Naive thymus-derived CD4-positive, alpha-beta T cell (primary cell): ENCODE measurements at regions of chr5 and their contacts with region 1.

Region 1: DNA sequence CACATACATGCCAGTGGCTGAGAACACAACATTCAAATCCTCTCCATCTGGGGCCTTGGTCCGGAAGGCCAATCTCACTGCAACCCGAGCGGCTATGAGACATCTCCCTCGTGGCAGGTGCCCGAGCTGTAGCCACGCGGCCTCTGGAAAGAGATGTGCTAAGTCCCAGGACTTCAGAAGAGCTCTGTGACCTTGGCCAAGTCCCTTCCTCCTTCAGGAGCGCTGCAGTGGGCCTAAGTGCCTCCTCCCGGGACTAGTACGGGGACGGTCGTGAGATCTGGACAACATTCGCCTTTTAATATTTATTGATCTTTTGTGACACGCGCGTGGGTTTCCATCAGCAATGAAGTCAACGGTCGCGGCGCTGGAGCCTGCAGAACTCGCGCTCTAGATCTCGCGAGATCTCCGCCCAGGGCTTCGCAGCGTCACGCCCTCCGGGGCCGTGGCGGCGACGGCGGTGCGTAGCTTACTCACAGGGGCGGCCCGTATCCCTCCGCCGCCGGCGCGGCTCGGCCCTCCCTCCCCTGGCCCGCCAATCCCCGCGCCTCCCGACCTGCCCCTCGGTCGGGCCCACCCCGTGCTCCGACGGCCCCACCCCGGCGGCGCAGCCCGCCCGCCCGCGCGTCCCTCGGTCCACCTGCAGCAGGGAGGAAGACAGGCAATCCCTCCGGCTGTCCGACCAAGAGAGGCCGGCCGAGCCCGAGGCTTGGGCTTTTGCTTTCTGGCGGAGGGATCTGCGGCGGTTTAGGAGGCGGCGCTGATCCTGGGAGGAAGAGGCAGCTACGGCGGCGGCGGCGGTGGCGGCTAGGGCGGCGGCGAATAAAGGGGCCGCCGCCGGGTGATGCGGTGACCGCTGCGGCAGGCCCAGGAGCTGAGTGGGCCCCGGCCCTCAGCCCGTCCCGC is at the start of gene UBE2D2:
- DNase-seq: peak; percentile 95 to 98 (median 97)
- ATAC-seq: peak; percentile 94
- H3K4me3 ChIP-seq: peak within 1 kb of the TSS; percentile 85
- H3K4me3 Mint-ChIP-seq: peak within 1 kb of the TSS; percentile 90 to 100 (median 98)
- H3K27ac ChIP-seq: peak within 1 kb of the TSS; percentile 92
- H3K27ac Mint-ChIP-seq: peak within 1 kb of the TSS; percentile 88 to 98 (median 95)
- H3K4me1 ChIP-seq: peaks cover 26 to 36% of the 10 kb centered on the region in 2 donors
- H3K4me1 Mint-ChIP-seq: peaks cover 28 to 39% (median 34%) of the 10 kb centered on the region in 7 donors
- H3K27me3 ChIP-seq: no peaks in the 10 kb centered on the region
- H3K27me3 Mint-ChIP-seq: no peaks in the 10 kb centered on the region
- total RNA-seq, gene UBE2D2: 145 to 214 (median 184) TPM

Region 2: GRCh38 chr5:138464008-138464387 is 1097.0 kb before region 1 on chr5:
- CTCF ChIA-PET with region 1: no interaction called
- POLR2A ChIA-PET with region 1: no interaction called
- intact Hi-C with region 1: loop called (anchors 1 to 5 kb)
- DNase-seq: peak; percentile 90 to 97 (median 94)
- ATAC-seq: peak; percentile 71
- H3K4me3 ChIP-seq: peak overlapping the region; percentile 95
- H3K4me3 Mint-ChIP-seq: peak overlapping the region; percentile 78 to 93 (median 89)
- H3K27ac ChIP-seq: peak overlapping the region; percentile 91
- H3K27ac Mint-ChIP-seq: peak overlapping the region; percentile 76 to 97 (median 91)
- H3K4me1 ChIP-seq: peaks cover 31 to 43% of the 10 kb centered on the region in 2 donors
- H3K4me1 Mint-ChIP-seq: peaks cover 36 to 54% (median 50%) of the 10 kb centered on the region in 7 donors
- H3K27me3 ChIP-seq: no peaks in the 10 kb centered on the region
- H3K27me3 Mint-ChIP-seq: peaks cover 0 to 20% (median 0%) of the 10 kb centered on the region in 5 donors

Region 3: DNA sequence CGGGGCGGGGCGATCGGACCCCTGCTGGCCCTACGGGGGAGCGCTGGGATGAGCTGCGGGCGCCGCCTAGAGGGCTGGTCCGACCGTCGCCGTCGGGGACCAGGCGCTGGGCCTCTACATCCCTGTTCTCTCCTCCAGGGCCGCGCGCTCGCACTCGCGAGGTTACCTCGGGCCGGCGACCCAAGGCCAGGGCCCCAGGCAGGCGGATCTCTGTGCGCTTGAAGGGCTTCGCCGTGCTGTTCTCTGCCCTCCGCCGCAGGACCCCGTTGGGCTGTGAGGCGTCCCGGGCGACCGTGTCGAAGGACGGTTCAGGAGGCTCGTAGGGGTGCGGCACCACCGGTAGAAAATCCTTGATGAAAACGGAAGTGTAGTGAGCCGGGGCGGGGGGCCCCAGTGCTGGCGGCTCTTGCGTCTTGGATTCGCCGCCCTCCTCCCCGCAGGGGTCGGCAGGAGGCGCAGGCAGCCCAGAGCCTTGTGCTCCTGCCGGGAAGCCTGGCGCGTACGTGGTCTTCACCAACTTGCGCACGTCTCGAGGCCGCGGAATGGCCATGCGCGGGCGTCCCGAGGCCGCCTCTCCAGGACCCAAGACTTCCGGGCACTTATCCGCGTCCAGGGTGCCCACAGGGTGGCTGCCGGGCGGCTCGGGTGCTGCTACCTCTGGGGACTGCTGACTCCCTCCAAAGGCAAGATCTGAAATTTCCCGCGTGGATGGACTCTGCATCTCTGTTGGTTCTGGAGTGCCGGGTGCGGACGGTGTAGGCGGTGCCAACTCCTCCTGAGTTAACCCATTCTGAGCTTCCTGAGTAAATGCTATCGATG is 168.1 kb before region 1 on chr5:
- CTCF ChIA-PET with region 1: no interaction called
- POLR2A ChIA-PET with region 1: no interaction called
- intact Hi-C with region 1: loop called in 1 of 2 experiments (anchors 1 kb)
- DNase-seq: peak; percentile 39 to 87 (median 60)
- ATAC-seq: peak; percentile 82
- H3K4me3 ChIP-seq: peak overlapping the region; percentile 76
- H3K4me3 Mint-ChIP-seq: peak overlapping the region; percentile 87 to 97 (median 90)
- H3K27ac ChIP-seq: peak overlapping the region; percentile 17
- H3K27ac Mint-ChIP-seq: peak overlapping the region in 6 of 9 donors; percentile 7 to 97 (median 59)
- H3K4me1 ChIP-seq: peaks cover 5 to 34% of the 10 kb centered on the region in 2 donors
- H3K4me1 Mint-ChIP-seq: peaks cover 12 to 61% (median 23%) of the 10 kb centered on the region in 7 donors
- H3K27me3 ChIP-seq: no peaks in the 10 kb centered on the region
- H3K27me3 Mint-ChIP-seq: no peaks in the 10 kb centered on the region

Region 4: GRCh38 chr5:139482050-139482889 is 78.7 kb before region 1 on chr5 and contains the start of gene STING1:
- CTCF ChIA-PET with region 1: no interaction called
- POLR2A ChIA-PET with region 1: interaction called, 10 read pairs
- intact Hi-C with region 1: loop called in 1 of 2 experiments (anchors 2 kb)
- DNase-seq: peak; percentile 29 to 83 (median 71)
- ATAC-seq: peak; percentile 86
- H3K4me3 ChIP-seq: peak within 1 kb of the TSS; percentile 87
- H3K4me3 Mint-ChIP-seq: peak within 1 kb of the TSS; percentile 86 to 99 (median 94)
- H3K27ac ChIP-seq: peak within 1 kb of the TSS; percentile 80
- H3K27ac Mint-ChIP-seq: peak within 1 kb of the TSS; percentile 94 to 99 (median 96)
- H3K4me1 ChIP-seq: peaks cover 21 to 29% of the 10 kb centered on the region in 2 donors
- H3K4me1 Mint-ChIP-seq: peaks cover 26 to 45% (median 39%) of the 10 kb centered on the region in 7 donors
- H3K27me3 ChIP-seq: no peaks in the 10 kb centered on the region
- H3K27me3 Mint-ChIP-seq: no peaks in the 10 kb centered on the region
- total RNA-seq, gene STING1: 124 to 213 (median 130) TPM

Region 5: GRCh38 chr5:139593716-139594319 is 32.8 kb after region 1 on chr5:
- CTCF ChIA-PET with region 1: interaction called, 4 read pairs
- POLR2A ChIA-PET with region 1: interaction called, 10 read pairs
- intact Hi-C with region 1: loop called (anchors 5 kb)
- DNase-seq: no peak
- ATAC-seq: no peak
- H3K4me3 ChIP-seq: no peak overlapping the region
- H3K4me3 Mint-ChIP-seq: no peak overlapping the region
- H3K27ac ChIP-seq: peak overlapping the region; percentile 20
- H3K27ac Mint-ChIP-seq: peak overlapping the region in 1 of 9 donors; percentile 59
- H3K4me1 ChIP-seq: peaks cover 0 to 22% of the 10 kb centered on the region in 2 donors
- H3K4me1 Mint-ChIP-seq: peaks cover 39 to 73% (median 52%) of the 10 kb centered on the region in 7 donors
- H3K27me3 ChIP-seq: no peaks in the 10 kb centered on the region
- H3K27me3 Mint-ChIP-seq: no peaks in the 10 kb centered on the region

Region 6: DNA sequence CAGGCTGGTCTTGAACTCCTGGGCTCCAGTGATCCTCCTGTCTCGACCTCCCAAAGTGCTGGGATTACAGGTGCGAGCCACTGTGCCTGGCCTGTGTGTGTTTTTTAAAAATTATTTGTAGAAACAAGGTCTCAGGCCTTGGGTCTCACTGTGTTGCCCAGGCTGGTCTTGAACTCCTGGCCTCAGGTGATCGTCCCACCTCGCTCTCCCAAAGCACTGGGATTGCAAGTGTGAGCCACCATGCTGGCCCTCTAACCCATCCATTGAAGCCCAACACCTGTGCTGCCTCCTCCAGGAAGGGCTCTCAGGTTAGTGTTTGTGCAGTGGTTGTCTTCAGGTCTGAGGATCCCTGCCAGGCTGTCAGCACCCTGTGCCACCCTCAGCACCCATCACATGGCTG is 143.7 kb after region 1 on chr5:
- CTCF ChIA-PET with region 1: no interaction called
- POLR2A ChIA-PET with region 1: no interaction called
- intact Hi-C with region 1: no loop called
- DNase-seq: no peak
- ATAC-seq: no peak
- H3K4me3 ChIP-seq: no peak overlapping the region
- H3K4me3 Mint-ChIP-seq: no peak overlapping the region
- H3K27ac ChIP-seq: no peak overlapping the region
- H3K27ac Mint-ChIP-seq: no peak overlapping the region
- H3K4me1 ChIP-seq: peaks cover 0 to 4% of the 10 kb centered on the region in 2 donors
- H3K4me1 Mint-ChIP-seq: peaks cover 6 to 44% (median 28%) of the 10 kb centered on the region in 7 donors
- H3K27me3 ChIP-seq: no peaks in the 10 kb centered on the region
- H3K27me3 Mint-ChIP-seq: peaks cover 5 to 44% (median 13%) of the 10 kb centered on the region in 5 donors

Region 7: GRCh38 chr5:140107312-140108083 is 546.5 kb after region 1 on chr5:
- CTCF ChIA-PET with region 1: no interaction called
- POLR2A ChIA-PET with region 1: no interaction called
- intact Hi-C with region 1: loop called (anchors 2 to 5 kb)
- DNase-seq: peak; percentile 87 to 96 (median 94)
- ATAC-seq: peak; percentile 92
- H3K4me3 ChIP-seq: peak overlapping the region; percentile 80
- H3K4me3 Mint-ChIP-seq: peak overlapping the region; percentile 93 to 99 (median 97)
- H3K27ac ChIP-seq: peak overlapping the region; percentile 91
- H3K27ac Mint-ChIP-seq: peak overlapping the region; percentile 96 to 99 (median 99)
- H3K4me1 ChIP-seq: peaks cover 19 to 35% of the 10 kb centered on the region in 2 donors
- H3K4me1 Mint-ChIP-seq: peaks cover 30 to 59% (median 47%) of the 10 kb centered on the region in 7 donors
- H3K27me3 ChIP-seq: peaks cover 0 to 7% of the 10 kb centered on the region in 2 donors
- H3K27me3 Mint-ChIP-seq: peaks cover 0 to 77% (median 4%) of the 10 kb centered on the region in 5 donors